AG04449 (cell line): ENCODE measurements at regions of chr3 and their contacts with region 1.

Region 1: GRCh38 chr3:168040607-168041208 is 55.0 kb downstream of the GOLIM4 start:
- DNase-seq: peak; percentile 36
- H3K4me3 ChIP-seq: no peak overlapping the region
- CTCF ChIP-seq: peak; percentile 64

Region 2: DNA sequence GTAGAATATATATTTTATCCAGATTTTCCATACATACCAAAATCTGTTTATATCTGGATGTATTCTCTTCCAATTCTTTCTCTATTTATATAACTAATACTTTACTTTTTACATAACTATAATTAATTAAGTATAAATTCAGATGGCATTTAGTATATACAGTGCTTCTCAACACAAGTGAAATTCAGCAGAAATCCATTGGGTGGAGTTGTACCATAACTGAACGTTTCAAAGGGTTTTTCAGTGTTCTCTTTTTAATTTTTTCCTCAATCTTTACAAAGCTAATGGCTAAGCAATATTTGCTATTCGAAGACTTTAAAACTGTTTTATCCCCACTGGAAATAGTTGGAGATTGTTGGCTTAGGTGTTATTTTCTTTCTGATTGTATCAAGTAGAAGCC is 646.7 kb before region 1 on chr3:
- CTCF ChIA-PET with region 1: no interaction called
- POLR2A ChIA-PET with region 1: no interaction called
- DNase-seq: no peak
- H3K4me3 ChIP-seq: no peak overlapping the region
- CTCF ChIP-seq: no peak

Region 3: DNA sequence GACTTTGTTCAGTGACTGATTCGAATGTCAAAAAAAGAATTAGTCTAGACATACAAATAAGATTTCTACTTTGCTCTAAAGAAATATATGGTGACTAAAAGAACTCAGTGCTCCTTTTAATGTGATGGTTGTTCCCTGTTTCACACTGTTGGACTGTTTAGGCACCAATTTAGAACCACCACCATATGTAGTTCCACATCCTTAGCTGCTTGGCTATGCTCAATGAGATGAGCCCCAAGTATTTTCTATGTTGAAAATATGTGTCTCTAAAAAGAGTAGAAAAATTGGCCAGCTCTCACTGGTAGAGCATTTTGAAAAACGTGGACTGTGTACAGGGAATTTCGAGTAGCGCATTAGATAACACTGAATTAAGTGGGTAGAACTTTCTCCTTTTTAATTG is 112.3 kb before region 1 on chr3:
- CTCF ChIA-PET with region 1: interaction called, 51 read pairs
- POLR2A ChIA-PET with region 1: no interaction called
- DNase-seq: no peak
- H3K4me3 ChIP-seq: no peak overlapping the region
- CTCF ChIP-seq: no peak

Region 4: GRCh38 chr3:168024537-168024941 is 16.2 kb before region 1 on chr3:
- CTCF ChIA-PET with region 1: interaction called, 29 read pairs
- POLR2A ChIA-PET with region 1: no interaction called
- DNase-seq: peak; percentile 55
- H3K4me3 ChIP-seq: no peak overlapping the region
- CTCF ChIP-seq: no peak

Region 5: DNA sequence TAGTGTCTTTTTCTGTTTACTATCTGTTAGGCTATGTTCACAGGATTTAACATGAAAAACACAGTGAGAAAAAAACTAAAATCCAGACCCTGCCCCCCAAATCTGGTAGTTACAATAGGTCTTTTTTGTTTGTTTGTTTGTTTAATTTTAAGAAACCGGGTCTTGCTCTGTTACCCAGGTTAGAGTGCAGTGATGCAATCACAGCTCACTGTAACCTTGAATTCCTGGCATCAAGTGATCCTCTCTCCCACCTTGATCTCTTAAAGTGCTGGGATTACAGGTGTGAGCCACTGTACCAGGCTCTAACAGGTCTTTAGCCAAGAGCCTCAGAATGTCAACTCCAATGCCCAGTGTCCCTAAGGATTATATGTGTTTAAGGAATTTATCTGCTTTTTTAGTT is 143.1 kb after region 1 on chr3:
- CTCF ChIA-PET with region 1: no interaction called
- POLR2A ChIA-PET with region 1: no interaction called
- DNase-seq: no peak
- H3K4me3 ChIP-seq: no peak overlapping the region
- CTCF ChIP-seq: no peak